ENCODE measurements at regions of chr18 and their contacts with region 1.

Region 1: DNA sequence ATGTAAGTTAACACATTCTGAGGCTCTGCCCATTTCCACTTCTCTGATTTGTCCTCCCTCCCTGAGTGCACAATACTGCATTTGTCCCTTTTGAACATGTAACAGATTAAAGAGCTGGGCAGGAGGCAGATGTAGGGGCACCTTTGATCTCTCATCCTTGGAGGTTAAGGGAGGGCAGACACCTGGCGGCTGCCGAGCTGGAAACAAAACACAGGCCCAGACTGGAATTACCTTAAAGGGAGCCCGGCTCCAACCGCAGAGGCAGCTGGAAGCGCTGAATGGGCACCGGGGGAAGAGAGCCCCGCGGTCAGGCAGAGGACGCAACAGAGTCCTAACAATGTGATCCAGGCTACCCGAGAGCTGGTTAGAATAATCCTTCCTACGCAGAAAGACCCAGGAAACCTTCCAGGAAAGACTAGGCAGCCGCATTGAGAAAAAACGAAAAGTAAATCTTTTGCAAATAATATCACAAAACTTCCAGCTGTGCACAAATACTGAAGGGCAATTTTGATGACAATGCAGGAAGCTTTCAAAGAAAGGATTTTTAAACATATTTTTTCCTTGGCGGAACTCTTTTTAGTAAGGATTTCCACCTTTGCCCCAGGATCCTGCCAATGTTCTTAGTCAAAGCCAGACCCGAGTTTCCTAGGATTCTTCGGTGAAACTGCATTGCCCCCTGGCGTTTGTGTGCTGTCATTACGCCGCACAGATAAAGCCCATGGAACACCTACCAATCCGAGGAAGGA is 216.0 kb downstream of the TGIF1 start:
- DNase-seq: peak; percentile 91
- H3K4me3 Mint-ChIP-seq: no peak overlapping the region
- H3K27ac Mint-ChIP-seq: peak overlapping the region; percentile 72
- H3K4me1 Mint-ChIP-seq: peaks cover 15% of the 10 kb centered on the region
- H3K27me3 Mint-ChIP-seq: no peaks in the 10 kb centered on the region
- CTCF ChIP-seq: peak; percentile 91

Region 2: GRCh38 chr18:2723207-2723606 is 942.7 kb before region 1 on chr18:
- CTCF ChIA-PET with region 1: no interaction called
- POLR2A ChIA-PET with region 1: no interaction called
- intact Hi-C with region 1: no loop called
- DNase-seq: no peak
- H3K4me3 Mint-ChIP-seq: no peak overlapping the region
- H3K27ac Mint-ChIP-seq: no peak overlapping the region
- H3K4me1 Mint-ChIP-seq: peaks cover 7% of the 10 kb centered on the region
- H3K27me3 Mint-ChIP-seq: no peaks in the 10 kb centered on the region
- CTCF ChIP-seq: no peak

Region 3: DNA sequence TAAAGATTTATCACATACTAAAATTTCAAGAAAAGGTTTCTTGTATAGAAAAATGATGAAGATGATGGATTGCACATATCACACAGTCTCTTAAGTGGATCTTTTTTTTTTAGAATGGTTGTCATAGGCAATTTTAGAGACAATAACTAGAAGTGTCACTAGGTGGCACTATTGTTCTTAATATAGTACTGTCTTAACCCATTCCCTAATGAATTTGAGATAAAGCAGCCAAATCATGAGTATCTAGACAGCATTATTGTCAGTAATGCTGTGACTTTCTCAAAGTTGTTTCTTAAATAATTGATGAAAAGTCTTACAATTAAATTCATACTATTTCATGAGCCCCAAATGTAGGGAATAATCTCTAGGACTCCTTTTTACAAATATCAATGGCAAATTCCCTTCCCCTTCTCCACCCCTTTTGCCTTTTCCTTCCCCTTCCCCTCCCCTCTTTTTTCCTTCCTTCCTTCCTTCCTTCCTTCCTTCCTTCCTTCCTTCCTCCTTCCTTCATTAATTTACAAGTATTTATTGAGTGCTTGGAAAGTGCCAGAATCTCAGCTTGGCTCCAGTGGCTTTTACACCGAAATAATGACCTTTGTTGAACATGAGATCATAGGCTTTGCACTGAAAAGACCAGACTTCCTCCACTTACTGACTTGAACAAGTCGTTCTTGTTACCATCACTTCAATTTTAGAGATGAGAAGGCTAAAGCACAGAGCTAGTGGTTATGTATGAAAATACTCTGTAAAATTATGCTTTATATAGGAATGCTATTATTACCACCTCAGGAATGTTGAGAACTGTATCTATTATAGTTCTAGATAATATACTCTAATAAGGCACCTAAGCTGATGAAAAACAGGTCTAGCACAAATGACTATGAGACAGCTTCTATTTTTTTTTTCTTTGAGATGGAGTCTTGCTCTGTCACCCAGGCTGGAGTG is 384.2 kb before region 1 on chr18:
- CTCF ChIA-PET with region 1: interaction called, 106 read pairs
- POLR2A ChIA-PET with region 1: interaction called, 34 read pairs
- intact Hi-C with region 1: loop called (anchors 1 kb)
- DNase-seq: peak; percentile 80
- H3K4me3 Mint-ChIP-seq: no peak overlapping the region
- H3K27ac Mint-ChIP-seq: no peak overlapping the region
- H3K4me1 Mint-ChIP-seq: peaks cover 6% of the 10 kb centered on the region
- H3K27me3 Mint-ChIP-seq: no peaks in the 10 kb centered on the region
- CTCF ChIP-seq: peak; percentile 52

Region 4: DNA sequence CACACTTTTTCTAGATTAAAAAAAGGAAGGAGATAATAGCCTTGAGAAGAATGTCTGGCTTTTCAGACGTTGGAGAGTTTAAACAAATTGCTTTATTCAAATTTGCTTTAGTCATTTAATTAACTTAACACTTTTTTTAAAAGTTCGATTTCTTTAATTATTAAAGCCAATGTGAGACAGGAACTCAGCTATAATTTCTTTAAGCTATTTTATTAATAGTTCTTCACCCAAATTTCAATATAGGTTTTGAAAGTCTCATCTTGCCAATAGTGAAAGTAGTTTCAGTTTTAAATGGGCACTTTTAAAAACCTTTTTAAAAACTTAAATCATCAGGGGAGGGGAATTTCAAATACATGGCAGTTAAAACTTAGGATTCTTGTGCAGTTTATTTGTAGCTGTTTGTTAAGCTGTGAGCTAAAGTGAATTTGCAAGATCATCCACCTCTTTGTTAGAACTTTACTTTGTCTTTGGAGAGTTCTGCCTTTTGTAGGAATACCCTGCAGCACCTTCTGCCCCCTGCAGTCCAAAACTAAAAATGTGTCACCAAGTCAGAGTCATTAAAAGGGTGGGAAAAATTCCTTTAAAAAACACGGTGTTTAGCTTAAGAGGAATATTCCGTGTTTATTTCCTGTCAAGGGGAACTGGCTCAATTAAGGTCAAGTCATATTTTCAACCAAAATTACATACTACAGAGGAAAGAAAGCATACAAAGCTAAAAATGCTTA is 211.4 kb before region 1 on chr18:
- CTCF ChIA-PET with region 1: interaction called, 86 read pairs
- POLR2A ChIA-PET with region 1: interaction called, 127 read pairs
- intact Hi-C with region 1: loop called (anchors 1 kb)
- DNase-seq: peak; percentile 62
- H3K4me3 Mint-ChIP-seq: peak overlapping the region; percentile 95
- H3K27ac Mint-ChIP-seq: peak overlapping the region; percentile 99
- H3K4me1 Mint-ChIP-seq: peaks cover 37% of the 10 kb centered on the region
- H3K27me3 Mint-ChIP-seq: no peaks in the 10 kb centered on the region
- CTCF ChIP-seq: peak; percentile 48

Region 5: DNA sequence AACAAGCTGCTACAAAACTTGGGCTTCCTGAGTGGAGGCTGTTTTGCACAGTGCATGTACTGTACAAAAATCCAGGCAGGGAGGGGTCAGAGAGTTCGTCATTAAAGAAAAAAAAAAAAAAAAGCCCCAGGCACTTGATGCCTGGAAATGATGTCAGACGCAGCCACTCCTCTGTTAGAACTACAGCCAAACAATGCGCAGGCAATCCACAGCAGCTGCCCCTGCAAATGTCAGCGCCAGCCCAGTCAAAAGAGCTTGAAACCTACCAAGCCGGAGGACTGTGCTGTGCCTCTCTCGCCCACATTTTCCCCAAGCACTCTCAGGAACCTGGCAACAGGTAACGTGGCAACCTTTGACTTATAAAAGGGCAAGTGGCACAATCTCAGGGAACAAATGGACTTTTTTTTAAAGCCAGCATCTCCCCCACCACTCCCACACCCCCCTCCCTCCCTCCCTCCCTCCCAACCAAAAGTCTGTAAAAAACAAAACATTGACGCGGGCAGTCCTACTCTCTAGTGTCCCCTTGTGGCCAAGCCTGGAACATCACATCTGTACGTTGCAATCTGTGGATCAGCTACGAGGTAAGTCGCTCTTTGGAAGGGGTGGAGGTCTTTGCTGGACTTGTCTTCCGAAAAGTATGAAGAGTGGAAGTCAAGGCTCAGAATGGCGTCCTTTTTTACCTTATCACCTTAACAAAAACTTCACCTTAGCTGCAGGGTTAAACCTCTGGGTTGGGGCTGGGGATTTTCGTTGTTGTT is 71.9 kb before region 1 on chr18:
- CTCF ChIA-PET with region 1: interaction called, 73 read pairs
- POLR2A ChIA-PET with region 1: interaction called, 92 read pairs
- intact Hi-C with region 1: loop called (anchors 1 kb)
- DNase-seq: peak; percentile 96
- H3K4me3 Mint-ChIP-seq: peak overlapping the region; percentile 82
- H3K27ac Mint-ChIP-seq: peak overlapping the region; percentile 98
- H3K4me1 Mint-ChIP-seq: peaks cover 40% of the 10 kb centered on the region
- H3K27me3 Mint-ChIP-seq: no peaks in the 10 kb centered on the region
- CTCF ChIP-seq: peak; percentile 80

Region 6: DNA sequence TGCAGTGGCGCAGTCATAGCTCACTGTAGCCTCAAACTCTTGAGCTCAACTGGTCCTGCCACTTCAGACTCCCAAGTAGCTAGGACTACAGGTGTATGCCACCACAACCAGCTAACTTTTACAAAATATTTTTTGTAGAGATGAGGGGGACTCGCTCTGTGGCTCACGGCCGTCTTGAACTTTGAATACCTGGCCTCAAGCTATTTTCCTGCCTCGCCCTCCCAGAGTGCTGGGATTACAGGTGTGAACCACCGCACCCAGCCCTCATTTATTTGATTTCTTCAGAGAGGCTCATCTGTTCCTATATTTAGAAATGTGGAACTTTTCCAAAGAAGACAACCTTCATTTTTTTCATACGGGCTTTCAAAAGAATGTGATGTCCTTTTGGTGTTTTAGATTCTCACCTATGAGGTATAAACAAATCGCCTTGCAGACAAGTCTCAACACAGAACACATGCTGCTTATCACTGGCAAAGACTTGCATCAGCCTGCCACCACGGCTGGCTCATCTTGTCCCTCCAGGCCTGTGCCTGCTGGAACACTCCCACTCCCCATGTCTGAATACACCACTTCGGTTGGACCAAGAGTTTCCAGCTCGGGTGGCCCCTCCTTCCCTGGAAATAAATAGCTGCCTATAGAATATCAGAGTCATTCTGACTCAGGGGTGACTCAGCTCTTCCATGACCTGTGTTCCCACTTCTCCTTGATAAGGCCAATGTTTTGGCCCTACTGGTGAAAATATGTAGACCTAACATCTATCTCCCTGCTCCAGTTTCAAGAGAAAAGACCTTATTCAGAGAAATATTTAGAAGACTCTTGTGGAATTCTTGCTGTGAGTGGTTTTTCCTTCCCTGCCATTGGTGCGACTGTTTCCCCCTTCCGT is 13.3 kb before region 1 on chr18:
- CTCF ChIA-PET with region 1: interaction called, 43 read pairs
- POLR2A ChIA-PET with region 1: interaction called, 70 read pairs
- intact Hi-C with region 1: no loop called
- DNase-seq: peak; percentile 99
- H3K4me3 Mint-ChIP-seq: peak overlapping the region; percentile 4
- H3K27ac Mint-ChIP-seq: peak overlapping the region; percentile 91
- H3K4me1 Mint-ChIP-seq: peaks cover 41% of the 10 kb centered on the region
- H3K27me3 Mint-ChIP-seq: no peaks in the 10 kb centered on the region
- CTCF ChIP-seq: peak; percentile 13

Region 7: GRCh38 chr18:3877678-3878077 is 211.7 kb after region 1 on chr18:
- CTCF ChIA-PET with region 1: no interaction called
- POLR2A ChIA-PET with region 1: no interaction called
- intact Hi-C with region 1: no loop called
- DNase-seq: peak; percentile 15
- H3K4me3 Mint-ChIP-seq: no peak overlapping the region
- H3K27ac Mint-ChIP-seq: no peak overlapping the region
- H3K4me1 Mint-ChIP-seq: no peaks in the 10 kb centered on the region
- H3K27me3 Mint-ChIP-seq: peaks cover 20% of the 10 kb centered on the region
- CTCF ChIP-seq: no peak

Measured in MCF 10A (cell line).